ENCODE measurements at regions of chr13 and their contacts with region 1.

Region 1: GRCh38 chr13:75549262-75550158 is at the start of gene UCHL3:
- DNase-seq: peak; percentile 95 to 98 (median 97)
- H3K4me3 ChIP-seq: peak within 1 kb of the TSS; percentile 79
- H3K27ac ChIP-seq: peak within 1 kb of the TSS in 1 of 2 donors; percentile 82
- H3K4me1 ChIP-seq: peaks cover 3% of the 10 kb centered on the region
- H3K27me3 ChIP-seq: no peaks in the 10 kb centered on the region
- CTCF ChIP-seq: peak; percentile 64 to 94 (median 90)
- EP300 ChIP-seq: no peak
- POLR2A ChIP-seq: no peak
- total RNA-seq, gene UCHL3: 9.0 to 17.1 (median 13.0) TPM

Region 2: DNA sequence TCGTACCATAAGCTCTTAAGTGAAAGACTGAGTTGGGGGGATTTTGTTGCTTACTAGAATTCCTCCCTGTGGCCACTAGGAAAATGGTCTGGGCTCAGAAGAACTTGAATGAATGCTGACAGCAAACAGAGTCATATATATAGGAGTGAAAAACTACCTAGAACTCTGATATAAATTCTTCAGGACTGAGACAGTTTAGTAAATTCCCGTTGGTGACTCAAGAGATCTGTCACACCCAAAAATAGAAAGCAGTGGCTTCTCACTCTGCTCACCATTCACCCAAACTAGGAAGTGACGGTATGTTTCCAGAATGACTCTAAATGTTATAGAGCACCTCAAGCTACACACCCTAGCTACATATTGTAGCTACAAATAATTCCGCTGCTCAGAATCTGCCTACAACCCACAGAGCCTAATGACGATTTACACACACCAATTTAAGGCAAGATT is 183.8 kb before region 1 on chr13:
- intact Hi-C with region 1: loop called in 2 of 4 experiments (anchors 5 to 10 kb)
- DNase-seq: no peak
- H3K4me3 ChIP-seq: no peak overlapping the region
- H3K27ac ChIP-seq: no peak overlapping the region
- H3K4me1 ChIP-seq: peaks cover 5% of the 10 kb centered on the region
- H3K27me3 ChIP-seq: no peaks in the 10 kb centered on the region
- CTCF ChIP-seq: no peak
- EP300 ChIP-seq: no peak
- POLR2A ChIP-seq: no peak

Region 3: GRCh38 chr13:75372517-75372916 is 177.0 kb before region 1 on chr13:
- intact Hi-C with region 1: loop called in 2 of 4 experiments (anchors 5 to 10 kb)
- DNase-seq: no peak
- H3K4me3 ChIP-seq: no peak overlapping the region
- H3K27ac ChIP-seq: peak overlapping the region in 1 of 2 donors; percentile 16
- H3K4me1 ChIP-seq: peaks cover 2% of the 10 kb centered on the region
- H3K27me3 ChIP-seq: no peaks in the 10 kb centered on the region
- CTCF ChIP-seq: peak; percentile 66 to 71 (median 68)
- EP300 ChIP-seq: no peak
- POLR2A ChIP-seq: no peak